ENCODE measurements at regions of chr16 and their contacts with region 1.

Region 1: DNA sequence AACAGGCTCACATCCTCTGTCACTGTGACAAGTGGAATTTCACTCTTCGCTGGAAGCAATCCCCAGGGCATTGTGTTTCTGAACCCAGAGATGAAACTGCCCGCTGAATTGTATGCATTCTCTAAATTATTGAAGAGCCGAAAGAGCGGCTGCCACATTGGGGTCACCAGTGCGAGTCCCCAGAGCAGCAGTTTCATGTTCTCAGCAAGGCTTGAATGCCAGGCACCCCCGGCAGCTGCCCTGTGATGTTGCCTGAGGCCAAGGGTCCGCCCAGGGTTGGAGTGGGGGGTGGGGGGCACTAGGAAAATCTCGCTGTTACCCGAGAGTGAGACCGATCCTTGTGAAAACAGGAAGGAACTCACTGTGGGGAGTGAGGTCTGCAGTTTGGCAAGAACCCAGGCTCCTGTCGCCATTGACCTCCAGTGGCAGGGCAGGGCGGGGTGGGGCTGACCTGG is 20.7 kb upstream of the BCAR1 start:
- DNase-seq: peak; percentile 28
- ATAC-seq: peak; percentile 74
- H3K4me3 ChIP-seq: no peak overlapping the region; the same call in 1 of the 2 replicates
- H3K27ac ChIP-seq: peak overlapping the region; percentile 24; the same call in 1 of the 2 replicates
- H3K4me1 ChIP-seq: peaks cover 18% of the 10 kb centered on the region
- H3K27me3 ChIP-seq: no peaks in the 10 kb centered on the region
- CTCF ChIP-seq: no peak
- EP300 ChIP-seq: no peak
- POLR2A ChIP-seq: no peak
- RAD21 ChIP-seq: no peak

Region 2: DNA sequence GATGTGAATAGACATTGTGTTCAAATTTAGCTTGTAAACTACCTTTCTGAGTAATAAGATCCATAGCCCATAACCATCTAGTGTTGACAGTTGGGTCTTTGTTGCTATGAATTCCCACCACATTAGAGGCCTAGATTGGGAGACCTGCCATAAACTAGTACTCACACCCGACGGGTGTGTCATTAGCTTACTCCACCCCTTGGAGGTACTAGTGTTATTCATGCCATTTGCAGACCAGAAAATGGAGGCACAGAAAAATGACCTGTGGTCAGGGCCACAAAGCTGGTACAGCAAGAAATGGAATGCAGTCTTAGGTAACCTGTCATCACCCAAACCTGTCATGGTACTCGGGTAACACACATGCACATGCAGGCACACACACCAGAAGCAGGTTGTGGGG is 20.6 kb after region 1 on chr16:
- CTCF ChIA-PET with region 1: no interaction called
- POLR2A ChIA-PET with region 1: no interaction called
- RAD21 ChIA-PET with region 1: no interaction called
- SMC1A ChIA-PET with region 1: no interaction called
- in situ Hi-C with region 1: no loop called
- intact Hi-C with region 1: no loop called
- DNase-seq: no peak
- ATAC-seq: no peak
- H3K4me3 ChIP-seq: no peak overlapping the region
- H3K27ac ChIP-seq: no peak overlapping the region
- H3K4me1 ChIP-seq: peaks cover 9% of the 10 kb centered on the region
- H3K27me3 ChIP-seq: no peaks in the 10 kb centered on the region
- CTCF ChIP-seq: no peak
- EP300 ChIP-seq: no peak
- POLR2A ChIP-seq: no peak
- RAD21 ChIP-seq: no peak

Region 3: DNA sequence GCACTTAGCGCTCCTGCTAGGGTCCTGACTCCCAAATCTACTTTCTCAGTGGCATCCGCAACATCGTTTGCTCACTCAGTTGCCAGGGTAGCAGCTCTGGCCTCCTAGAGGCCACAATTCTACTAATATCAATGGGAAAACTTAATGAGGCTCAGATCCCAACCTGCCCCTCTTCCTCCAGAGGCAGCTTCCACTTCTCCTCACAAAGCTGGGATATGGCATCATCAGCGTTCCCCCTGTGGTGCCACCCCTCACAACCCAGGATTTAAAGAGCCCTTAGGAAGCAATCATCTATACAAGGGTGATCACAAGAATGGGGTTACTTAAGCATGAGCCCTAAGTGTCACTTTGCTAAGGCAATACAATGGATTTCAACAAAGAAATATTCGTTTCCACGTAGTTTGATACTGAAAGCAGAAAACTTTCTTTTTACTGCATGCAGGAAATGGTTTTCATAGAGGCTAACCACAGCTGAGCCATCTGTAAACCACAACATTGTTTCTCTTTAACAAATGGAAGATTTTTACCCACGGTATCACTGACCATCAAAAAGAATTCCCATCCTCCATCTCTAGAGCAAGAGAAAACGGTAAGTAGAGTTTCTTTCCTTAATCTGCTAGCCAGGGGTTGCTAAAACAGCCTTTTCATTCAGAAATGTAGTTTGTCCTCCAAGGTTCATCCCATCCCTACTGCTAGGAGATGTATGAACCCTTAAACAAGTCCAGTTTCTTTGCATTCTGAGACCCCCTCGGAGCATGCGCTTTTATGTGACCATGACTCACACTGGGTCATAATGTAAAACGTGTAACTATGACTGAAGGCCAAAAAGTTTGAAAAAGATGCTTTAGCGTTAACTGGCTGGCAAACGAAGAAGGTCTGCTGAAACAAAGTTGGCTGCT is 47.6 kb after region 1 on chr16:
- CTCF ChIA-PET with region 1: no interaction called
- POLR2A ChIA-PET with region 1: interaction called, 3 read pairs
- RAD21 ChIA-PET with region 1: no interaction called
- SMC1A ChIA-PET with region 1: no interaction called
- in situ Hi-C with region 1: no loop called
- intact Hi-C with region 1: loop called (anchors 5 kb)
- DNase-seq: peak; percentile 78
- ATAC-seq: peak; percentile 76
- H3K4me3 ChIP-seq: peak overlapping the region; percentile 4; the same call in 1 of the 2 replicates
- H3K27ac ChIP-seq: peak overlapping the region; percentile 79
- H3K4me1 ChIP-seq: peaks cover 34% of the 10 kb centered on the region
- H3K27me3 ChIP-seq: no peaks in the 10 kb centered on the region
- CTCF ChIP-seq: no peak
- EP300 ChIP-seq: peak; percentile 67 to 86; a peak in 3 of 4 replicates
- POLR2A ChIP-seq: no peak
- RAD21 ChIP-seq: 0 out of 2 replicates have a peak, but pooled peaks have one; percentile 14

Measured in GM12878 (cell line).